ENCODE measurements at regions of chr10 and their contacts with region 1.

Region 1: DNA sequence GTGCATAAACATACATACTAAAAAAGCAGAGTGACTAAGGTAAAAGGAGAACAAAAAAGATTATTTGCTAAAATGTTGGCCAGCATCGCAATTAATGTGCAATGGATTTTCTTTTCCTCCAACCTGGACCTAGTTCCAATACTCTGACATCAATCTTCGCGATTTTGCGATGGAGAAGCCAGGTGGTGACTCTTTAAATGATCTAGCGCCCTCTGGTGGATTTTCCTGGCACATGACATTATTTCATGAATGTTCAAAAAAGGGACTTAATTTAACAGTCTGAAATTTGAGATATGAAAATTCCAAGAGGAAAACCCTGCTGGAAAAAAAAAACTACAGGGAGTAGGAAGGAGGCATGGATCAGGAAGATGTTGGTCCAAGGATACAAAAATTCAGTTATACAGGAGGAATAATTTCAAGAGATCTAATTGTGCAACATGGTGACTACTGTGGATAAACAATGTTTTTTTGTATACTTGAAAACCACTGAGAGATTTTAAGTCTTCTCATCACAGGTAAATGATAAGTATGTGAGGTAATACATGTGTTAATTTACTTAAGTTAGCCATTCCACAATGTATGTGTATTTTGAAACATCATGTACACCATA is 4.3 kb upstream of the KCNMA1 start:
- ATAC-seq: peak in 2 of 8 experiments; percentile 9 to 11
- H3K4me3 ChIP-seq: no peak overlapping the region
- H3K27ac ChIP-seq: no peak overlapping the region
- H3K4me1 ChIP-seq: peaks cover 6 to 10% of the 10 kb centered on the region in 2 donors

Region 2: DNA sequence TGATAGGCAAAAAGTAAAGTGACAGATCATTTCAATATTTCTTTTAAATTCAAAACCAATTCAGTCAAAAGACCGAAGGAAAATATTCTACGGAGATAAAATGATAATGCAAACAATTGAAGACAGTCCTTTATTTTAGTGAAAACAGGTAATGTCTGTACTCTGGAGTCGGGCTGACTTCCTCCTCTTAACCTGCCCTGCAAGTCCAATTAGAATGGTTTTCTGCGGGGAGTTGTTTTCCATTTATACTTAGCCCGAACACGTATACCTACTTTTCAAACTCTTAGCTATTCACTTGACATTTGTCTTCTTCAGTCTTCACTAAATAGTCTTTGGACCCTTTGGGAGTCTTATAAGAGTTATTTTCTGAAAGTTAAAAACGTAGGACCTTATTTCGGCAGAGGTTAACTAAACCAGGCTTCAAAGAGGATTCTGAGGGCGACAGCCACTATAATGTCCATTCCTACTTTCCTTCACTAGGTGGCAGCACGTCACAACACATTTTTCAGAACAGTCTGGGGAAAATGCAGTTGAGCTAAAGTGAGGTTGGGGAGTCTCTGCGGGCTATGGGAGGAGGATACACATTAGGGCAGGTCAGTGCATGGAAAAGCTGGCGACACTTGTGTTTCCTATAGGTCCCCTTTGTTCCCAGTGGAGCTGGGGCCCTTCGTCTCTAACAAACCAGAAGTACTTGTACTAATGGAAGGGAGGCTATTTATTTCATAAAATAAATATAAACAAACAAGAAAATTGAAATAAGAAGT is 476.3 kb before region 1 on chr10:
- in situ Hi-C with region 1: loop called (anchors 5 to 25 kb)
- ATAC-seq: peak; percentile 8 to 77 (median 35)
- H3K4me3 ChIP-seq: no peak overlapping the region
- H3K27ac ChIP-seq: no peak overlapping the region
- H3K4me1 ChIP-seq: peaks cover 20 to 34% of the 10 kb centered on the region in 2 donors

Region 3: GRCh38 chr10:77173615-77174461 is 468.1 kb before region 1 on chr10:
- in situ Hi-C with region 1: loop called (anchors 5 to 25 kb)
- ATAC-seq: peak; percentile 74 to 93 (median 87)
- H3K4me3 ChIP-seq: no peak overlapping the region
- H3K27ac ChIP-seq: no peak overlapping the region
- H3K4me1 ChIP-seq: no peaks in the 10 kb centered on the region

Region 4: DNA sequence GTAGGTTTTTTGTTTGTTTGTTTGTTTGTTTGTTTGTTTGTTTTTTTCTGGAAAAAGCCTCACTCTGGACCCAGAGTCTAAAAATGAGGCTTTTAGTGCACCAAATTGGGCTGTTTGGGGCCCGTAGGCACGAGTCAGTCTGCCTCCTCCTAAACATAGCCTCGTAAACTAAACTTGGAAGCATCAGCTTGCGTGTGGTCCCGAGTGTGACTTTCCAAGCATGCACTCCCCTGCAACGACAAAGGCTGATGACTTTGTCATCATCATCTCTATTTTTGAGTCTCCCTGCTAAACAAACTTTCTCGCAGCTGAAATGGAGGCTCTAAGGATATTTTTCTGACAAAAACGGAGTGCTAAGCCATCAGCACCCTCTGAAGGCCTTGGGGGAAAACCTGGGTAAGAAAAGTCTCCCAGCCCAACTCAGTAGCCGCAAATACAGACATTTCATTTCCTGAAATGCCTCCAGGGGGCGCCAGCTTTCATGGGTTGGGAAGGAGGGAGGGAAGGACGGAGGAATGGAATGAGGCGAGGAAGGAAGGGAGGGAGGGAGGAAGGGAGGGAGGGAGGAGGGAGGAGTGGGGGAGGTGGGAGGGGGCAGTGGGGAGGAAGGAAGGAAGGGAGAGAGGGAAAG is 250.2 kb before region 1 on chr10:
- in situ Hi-C with region 1: loop called in 3 of 9 experiments (anchors 25 kb)
- ATAC-seq: peak; percentile 45 to 71 (median 60)
- H3K4me3 ChIP-seq: no peak overlapping the region
- H3K27ac ChIP-seq: no peak overlapping the region
- H3K4me1 ChIP-seq: peaks cover 1 to 18% of the 10 kb centered on the region in 2 donors

Region 5: GRCh38 chr10:77405771-77406241 is 236.1 kb before region 1 on chr10:
- in situ Hi-C with region 1: loop called in 1 of 9 experiments (anchors 25 kb)
- ATAC-seq: peak; percentile 85 to 99 (median 97)
- H3K4me3 ChIP-seq: no peak overlapping the region
- H3K27ac ChIP-seq: peak overlapping the region; percentile 44 to 79
- H3K4me1 ChIP-seq: peaks cover 21 to 27% of the 10 kb centered on the region in 2 donors